ENCODE measurements at regions of chr16 and their contacts with region 1.

Region 1: DNA sequence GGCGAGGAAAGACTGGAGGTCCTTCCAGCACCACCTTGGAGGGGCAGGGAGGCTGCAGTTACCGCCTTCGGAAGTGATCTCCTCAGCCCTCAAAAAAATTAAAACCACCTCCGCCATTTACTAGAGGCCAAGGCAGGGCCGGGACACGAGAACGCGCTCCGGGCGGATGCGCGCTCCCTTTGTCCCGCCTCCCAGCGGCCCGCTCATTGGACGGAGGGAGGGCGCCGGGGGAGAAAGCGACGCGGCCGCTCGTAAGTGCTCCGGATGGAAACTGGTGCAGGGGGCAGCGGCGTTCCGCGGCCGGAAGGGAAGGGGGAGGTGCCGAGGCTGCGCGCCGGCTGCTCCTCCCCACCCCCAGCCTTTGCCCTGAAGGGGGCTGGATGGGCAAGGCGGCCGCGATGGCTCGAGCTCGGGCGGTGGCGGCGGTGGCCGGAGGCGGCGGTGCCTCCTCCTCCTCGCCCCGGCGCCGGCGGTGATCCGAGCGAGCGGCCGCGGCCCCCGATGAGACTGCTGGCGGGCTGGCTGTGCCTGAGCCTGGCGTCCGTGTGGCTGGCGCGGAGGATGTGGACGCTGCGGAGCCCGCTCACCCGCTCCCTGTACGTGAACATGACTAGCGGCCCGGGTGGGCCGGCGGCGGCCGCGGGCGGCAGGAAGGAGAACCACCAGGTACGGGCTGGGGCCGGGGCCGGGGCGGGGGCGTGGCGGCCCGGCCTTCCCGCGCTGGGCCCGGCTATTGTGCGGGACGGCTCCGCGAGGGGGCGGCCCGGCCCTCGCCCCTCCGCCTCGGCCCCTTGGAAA is at the start of gene METTL9:
- H3K4me3 Mint-ChIP-seq: peak within 1 kb of the TSS; percentile 91
- H3K27ac Mint-ChIP-seq: peak within 1 kb of the TSS; percentile 95
- H3K4me1 Mint-ChIP-seq: peaks cover 56% of the 10 kb centered on the region
- H3K27me3 Mint-ChIP-seq: no peaks in the 10 kb centered on the region

Region 2: GRCh38 chr16:21617607-21618006 is 18.2 kb after region 1 on chr16:
- intact Hi-C with region 1: loop called (anchors 2 kb)
- H3K4me3 Mint-ChIP-seq: no peak overlapping the region
- H3K27ac Mint-ChIP-seq: no peak overlapping the region
- H3K4me1 Mint-ChIP-seq: peaks cover 67% of the 10 kb centered on the region
- H3K27me3 Mint-ChIP-seq: no peaks in the 10 kb centered on the region

Region 3: GRCh38 chr16:21650521-21650920 is 51.1 kb after region 1 on chr16:
- intact Hi-C with region 1: loop called (anchors 2 kb)
- H3K4me3 Mint-ChIP-seq: peak overlapping the region; percentile 83
- H3K27ac Mint-ChIP-seq: peak overlapping the region; percentile 85
- H3K4me1 Mint-ChIP-seq: peaks cover 70% of the 10 kb centered on the region
- H3K27me3 Mint-ChIP-seq: no peaks in the 10 kb centered on the region